ENCODE measurements at regions of chr14 and their contacts with region 1.

Region 1: DNA sequence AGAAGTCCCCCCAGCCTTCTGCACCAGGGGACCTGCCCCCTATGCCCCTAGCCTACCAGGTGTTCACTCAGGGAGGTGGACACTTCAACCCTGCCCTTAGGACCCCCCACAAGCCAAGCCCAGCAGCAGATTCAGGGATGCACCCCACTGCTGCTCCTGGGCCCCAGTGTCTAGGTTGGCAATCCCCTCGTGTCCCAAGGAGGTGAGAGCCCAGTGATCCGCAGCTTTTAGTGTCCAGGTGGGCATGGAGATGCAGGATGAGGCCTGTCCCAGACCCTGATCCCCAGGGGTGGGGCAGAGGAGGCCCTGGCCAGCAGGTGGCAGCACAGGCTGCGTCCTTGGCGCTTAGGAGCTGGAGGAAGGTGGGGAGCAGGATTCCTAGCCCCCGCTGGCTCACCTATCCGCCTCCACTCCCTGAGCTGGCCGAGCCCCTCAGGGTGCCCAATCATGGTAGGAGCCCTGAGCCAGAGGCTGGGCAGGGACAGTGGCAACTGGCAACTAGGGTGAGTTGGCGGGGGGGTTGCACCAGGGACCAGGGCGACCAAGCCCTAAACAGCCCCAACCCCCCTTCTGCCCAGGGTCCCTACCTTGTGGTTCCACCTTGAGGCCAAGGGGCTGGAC is 4.1 kb downstream of the CKB start:
- DNase-seq: no peak
- H3K4me3 ChIP-seq: no peak overlapping the region
- H3K27ac ChIP-seq: peak overlapping the region; percentile 96 to 98 (median 97)
- H3K4me1 ChIP-seq: peaks cover 48 to 67% (median 65%) of the 10 kb centered on the region in 4 donors
- H3K27me3 ChIP-seq: peaks cover 0 to 9% (median 4%) of the 10 kb centered on the region in 4 donors
- CTCF ChIP-seq: peak; percentile 93 to 96 (median 95)
- EP300 ChIP-seq: no peak
- POLR2A ChIP-seq: no peak

Region 2: GRCh38 chr14:103546652-103547454 is 28.3 kb after region 1 on chr14:
- intact Hi-C with region 1: loop called (anchors 1 kb)
- DNase-seq: no peak
- H3K4me3 ChIP-seq: no peak overlapping the region
- H3K27ac ChIP-seq: peak overlapping the region; percentile 93 to 97 (median 94)
- H3K4me1 ChIP-seq: peaks cover 72 to 100% (median 98%) of the 10 kb centered on the region in 4 donors
- H3K27me3 ChIP-seq: peaks cover 0 to 2% (median 0%) of the 10 kb centered on the region in 4 donors
- CTCF ChIP-seq: peak; percentile 85 to 92 (median 91)
- EP300 ChIP-seq: no peak
- POLR2A ChIP-seq: no peak